IMR-90 (cell line): ENCODE measurements at regions of chr1 and their contacts with region 1.

Region 1: DNA sequence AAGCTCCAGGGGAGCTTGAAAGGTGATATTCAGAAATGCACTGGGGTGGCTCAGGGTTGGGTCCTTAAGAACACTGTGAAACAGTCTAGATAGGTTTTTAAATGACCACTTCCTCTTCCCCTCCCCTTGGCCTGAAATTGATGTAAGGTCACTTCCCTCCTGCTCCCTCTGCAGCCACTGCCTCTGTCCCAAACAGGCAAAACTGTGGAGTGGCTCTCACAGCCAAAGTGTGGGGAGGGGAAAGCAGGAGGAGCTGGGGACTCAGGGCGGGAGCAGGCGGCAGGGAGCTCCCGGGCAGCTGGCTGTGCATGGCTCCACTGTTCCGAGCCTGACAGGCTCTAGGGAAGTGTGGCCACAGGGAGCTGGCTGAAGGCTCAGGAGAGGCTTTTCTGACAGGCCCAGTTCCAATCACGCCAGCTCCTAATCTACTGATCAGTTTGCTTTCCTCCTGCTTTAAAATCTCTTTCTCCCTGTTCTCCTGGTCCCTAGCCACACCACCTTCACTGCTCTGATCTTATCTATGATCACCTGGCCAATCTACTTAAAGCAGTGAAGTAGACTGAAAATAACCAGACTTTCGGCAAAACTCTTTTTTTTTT is 5.1 kb upstream of the CSRP1 start:
- DNase-seq: no peak
- ATAC-seq: peak; percentile 15
- H3K4me3 ChIP-seq: no peak overlapping the region
- H3K27ac ChIP-seq: peak overlapping the region; percentile 63
- H3K4me1 ChIP-seq: peaks cover 25% of the 10 kb centered on the region
- H3K27me3 ChIP-seq: no peaks in the 10 kb centered on the region
- CTCF ChIP-seq: no peak
- POLR2A ChIP-seq: no peak
- RAD21 ChIP-seq: no peak

Region 2: DNA sequence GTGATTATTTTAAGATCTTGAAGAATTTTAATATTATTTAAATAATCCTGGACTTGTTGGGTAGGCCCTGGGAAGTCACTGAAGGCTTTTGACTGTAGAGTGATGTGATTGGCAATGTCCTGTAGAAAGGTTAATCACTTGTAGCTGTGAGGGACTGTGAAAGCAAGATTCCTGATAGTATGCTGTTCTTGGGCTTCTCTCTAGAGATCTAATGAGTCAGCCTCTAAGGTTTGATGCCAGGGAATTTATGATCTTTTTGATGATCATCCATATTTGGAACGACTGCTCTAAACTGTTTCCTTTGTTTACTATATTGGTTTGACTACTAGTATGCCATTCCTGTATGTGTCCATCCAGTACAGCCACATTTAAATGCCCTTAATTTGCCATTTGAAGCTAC is 716.9 kb before region 1 on chr1:
- CTCF ChIA-PET with region 1: no interaction called
- POLR2A ChIA-PET with region 1: no interaction called
- dilution Hi-C with region 1: no loop called
- in situ Hi-C with region 1: no loop called
- intact Hi-C with region 1: no loop called
- DNase-seq: peak; percentile 74
- ATAC-seq: peak; percentile 79
- H3K4me3 ChIP-seq: no peak overlapping the region
- H3K27ac ChIP-seq: no peak overlapping the region
- H3K4me1 ChIP-seq: peaks cover 12% of the 10 kb centered on the region
- H3K27me3 ChIP-seq: no peaks in the 10 kb centered on the region
- CTCF ChIP-seq: no peak
- POLR2A ChIP-seq: no peak
- RAD21 ChIP-seq: no peak

Region 3: GRCh38 chr1:201348211-201348566 is 163.9 kb before region 1 on chr1:
- CTCF ChIA-PET with region 1: interaction called, 4 read pairs
- POLR2A ChIA-PET with region 1: no interaction called
- dilution Hi-C with region 1: no loop called
- in situ Hi-C with region 1: no loop called
- intact Hi-C with region 1: loop called (anchors 2 kb)
- DNase-seq: peak; percentile 63
- ATAC-seq: peak; percentile 91
- H3K4me3 ChIP-seq: no peak overlapping the region
- H3K27ac ChIP-seq: no peak overlapping the region
- H3K4me1 ChIP-seq: no peaks in the 10 kb centered on the region
- H3K27me3 ChIP-seq: peaks cover 53% of the 10 kb centered on the region
- CTCF ChIP-seq: peak; percentile 82
- POLR2A ChIP-seq: no peak
- RAD21 ChIP-seq: peak; percentile 82

Region 4: GRCh38 chr1:201447911-201448871 is 63.8 kb before region 1 on chr1:
- CTCF ChIA-PET with region 1: interaction called, 26 read pairs
- POLR2A ChIA-PET with region 1: no interaction called
- dilution Hi-C with region 1: no loop called
- in situ Hi-C with region 1: loop called (anchors 10 kb)
- intact Hi-C with region 1: loop called (anchors 1 kb)
- DNase-seq: peak; percentile 70
- ATAC-seq: peak; percentile 75
- H3K4me3 ChIP-seq: no peak overlapping the region
- H3K27ac ChIP-seq: no peak overlapping the region
- H3K4me1 ChIP-seq: peaks cover 13% of the 10 kb centered on the region
- H3K27me3 ChIP-seq: no peaks in the 10 kb centered on the region
- CTCF ChIP-seq: peak; percentile 74
- POLR2A ChIP-seq: no peak
- RAD21 ChIP-seq: peak; percentile 85

Region 5: DNA sequence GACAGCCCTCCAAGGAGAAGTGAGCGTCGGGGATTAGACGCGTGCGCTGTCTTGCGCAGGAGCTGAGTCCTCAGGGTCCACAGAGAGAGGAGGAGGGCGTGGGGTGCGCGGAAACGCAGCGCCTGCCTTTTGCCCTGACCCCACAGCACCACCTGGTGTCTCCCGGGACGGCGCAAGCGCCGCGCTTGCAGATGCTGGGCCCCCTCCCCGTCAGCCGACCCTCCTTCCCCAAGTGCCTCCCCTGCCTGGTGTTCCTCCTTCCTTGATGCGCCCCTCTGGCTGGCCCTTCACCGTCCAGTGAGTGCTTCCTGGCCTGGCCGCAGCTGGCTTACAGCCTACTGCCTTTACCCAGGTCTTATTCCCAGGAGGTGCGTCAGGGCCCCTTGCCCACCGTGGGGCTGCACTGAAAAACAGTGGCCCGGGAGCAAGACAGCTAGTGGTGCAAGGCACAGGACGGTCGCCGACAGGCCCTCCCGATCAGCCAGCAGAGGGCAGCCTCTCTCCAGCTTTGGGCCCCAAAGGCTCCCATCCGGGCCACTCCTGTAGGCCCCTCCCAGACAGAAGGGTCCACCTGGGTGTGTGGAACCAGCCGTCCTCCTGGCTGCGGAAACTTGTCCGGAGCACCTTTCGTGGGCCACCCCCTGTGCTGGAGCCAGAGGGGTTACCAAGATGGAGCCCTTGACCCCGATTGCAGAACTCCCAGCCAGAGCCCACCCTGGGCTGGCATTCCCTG is 30.1 kb before region 1 on chr1:
- CTCF ChIA-PET with region 1: interaction called, 103 read pairs
- POLR2A ChIA-PET with region 1: no interaction called
- dilution Hi-C with region 1: no loop called
- in situ Hi-C with region 1: no loop called
- intact Hi-C with region 1: loop called (anchors 1 kb)
- DNase-seq: peak; percentile 73
- ATAC-seq: peak; percentile 68
- H3K4me3 ChIP-seq: no peak overlapping the region
- H3K27ac ChIP-seq: no peak overlapping the region
- H3K4me1 ChIP-seq: peaks cover 14% of the 10 kb centered on the region
- H3K27me3 ChIP-seq: no peaks in the 10 kb centered on the region
- CTCF ChIP-seq: peak; percentile 86
- POLR2A ChIP-seq: no peak
- RAD21 ChIP-seq: peak; percentile 90

Region 6: GRCh38 chr1:201500670-201501120 is 11.3 kb before region 1 on chr1:
- CTCF ChIA-PET with region 1: interaction called, 31 read pairs
- POLR2A ChIA-PET with region 1: interaction called, 5 read pairs
- dilution Hi-C with region 1: no loop called
- in situ Hi-C with region 1: no loop called
- intact Hi-C with region 1: no loop called
- DNase-seq: no peak
- ATAC-seq: peak; percentile 4
- H3K4me3 ChIP-seq: no peak overlapping the region
- H3K27ac ChIP-seq: peak overlapping the region; percentile 88
- H3K4me1 ChIP-seq: peaks cover 51% of the 10 kb centered on the region
- H3K27me3 ChIP-seq: no peaks in the 10 kb centered on the region
- CTCF ChIP-seq: no peak
- POLR2A ChIP-seq: no peak
- RAD21 ChIP-seq: no peak

Region 7: GRCh38 chr1:201766131-201766866 is 254.3 kb after region 1 on chr1:
- CTCF ChIA-PET with region 1: no interaction called
- POLR2A ChIA-PET with region 1: no interaction called
- dilution Hi-C with region 1: no loop called
- in situ Hi-C with region 1: no loop called
- intact Hi-C with region 1: no loop called
- DNase-seq: peak; percentile 91
- ATAC-seq: peak; percentile 76
- H3K4me3 ChIP-seq: no peak overlapping the region
- H3K27ac ChIP-seq: no peak overlapping the region
- H3K4me1 ChIP-seq: peaks cover 20% of the 10 kb centered on the region
- H3K27me3 ChIP-seq: no peaks in the 10 kb centered on the region
- CTCF ChIP-seq: no peak
- POLR2A ChIP-seq: no peak
- RAD21 ChIP-seq: 0 out of 2 replicates have a peak, but pooled peaks have one; percentile 14

Region 8: DNA sequence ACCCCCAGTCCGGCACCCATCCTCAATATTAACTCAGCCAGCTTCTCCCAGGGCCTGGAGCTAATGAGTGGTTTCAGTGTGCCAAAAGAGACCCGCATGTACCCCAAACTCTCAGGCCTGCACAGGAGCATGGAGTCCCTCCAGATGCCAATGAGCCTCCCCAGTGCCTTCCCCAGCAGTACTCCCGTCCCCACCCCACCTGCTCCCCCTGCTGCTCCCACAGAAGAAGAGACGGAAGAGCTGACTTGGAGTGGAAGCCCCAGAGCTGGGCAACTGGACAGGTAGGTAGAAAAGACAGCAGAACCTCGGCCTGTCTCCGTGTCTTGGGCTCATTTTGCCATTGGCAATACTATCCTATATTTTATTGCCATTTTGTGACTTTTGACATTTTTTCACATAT is 271.5 kb after region 1 on chr1:
- CTCF ChIA-PET with region 1: no interaction called
- POLR2A ChIA-PET with region 1: no interaction called
- dilution Hi-C with region 1: no loop called
- in situ Hi-C with region 1: no loop called
- intact Hi-C with region 1: no loop called
- DNase-seq: no peak
- ATAC-seq: no peak
- H3K4me3 ChIP-seq: no peak overlapping the region
- H3K27ac ChIP-seq: peak overlapping the region; percentile 22; the same call in 1 of the 2 replicates
- H3K4me1 ChIP-seq: peaks cover 9% of the 10 kb centered on the region
- H3K27me3 ChIP-seq: no peaks in the 10 kb centered on the region
- CTCF ChIP-seq: no peak
- POLR2A ChIP-seq: no peak
- RAD21 ChIP-seq: 0 out of 2 replicates have a peak, but pooled peaks have one; percentile 19